CD4-positive, alpha-beta memory T cell (primary cell): ENCODE measurements at regions of chr17 and their contacts with region 1.

Region 1: DNA sequence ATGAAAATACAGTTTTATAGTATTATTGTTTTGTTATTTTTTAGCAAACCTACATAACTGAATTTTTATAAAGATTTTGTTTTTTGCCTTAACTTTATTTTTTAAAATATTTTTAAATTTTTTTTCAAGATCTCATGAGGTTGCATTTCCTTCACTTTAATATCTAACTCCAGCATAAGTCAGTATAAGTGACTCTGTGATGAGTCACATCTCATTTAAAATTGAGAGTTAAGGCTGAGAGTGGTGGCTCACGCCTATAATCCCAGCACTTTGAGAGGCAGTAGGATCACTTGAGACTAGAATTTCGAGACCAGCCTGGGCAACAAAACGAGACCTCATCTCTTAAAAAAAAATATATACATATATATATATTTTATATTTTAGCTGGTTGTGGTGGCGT is 44.0 kb downstream of the NLK start:
- DNase-seq: no peak
- H3K4me3 ChIP-seq: no peak overlapping the region
- H3K4me3 Mint-ChIP-seq: no peak overlapping the region
- H3K27ac ChIP-seq: no peak overlapping the region
- H3K27ac Mint-ChIP-seq: no peak overlapping the region
- H3K4me1 ChIP-seq: no peaks in the 10 kb centered on the region
- H3K4me1 Mint-ChIP-seq: peaks cover 10 to 55% (median 15%) of the 10 kb centered on the region in 4 donors
- H3K27me3 ChIP-seq: no peaks in the 10 kb centered on the region
- H3K27me3 Mint-ChIP-seq: no peaks in the 10 kb centered on the region

Region 2: GRCh38 chr17:28145348-28145747 is 58.8 kb after region 1 on chr17:
- CTCF ChIA-PET with region 1: no interaction called
- POLR2A ChIA-PET with region 1: no interaction called
- intact Hi-C with region 1: loop called (anchors 10 kb)
- DNase-seq: no peak
- H3K4me3 ChIP-seq: no peak overlapping the region
- H3K4me3 Mint-ChIP-seq: no peak overlapping the region
- H3K27ac ChIP-seq: no peak overlapping the region
- H3K27ac Mint-ChIP-seq: no peak overlapping the region
- H3K4me1 ChIP-seq: no peaks in the 10 kb centered on the region
- H3K4me1 Mint-ChIP-seq: no peaks in the 10 kb centered on the region
- H3K27me3 ChIP-seq: no peaks in the 10 kb centered on the region
- H3K27me3 Mint-ChIP-seq: no peaks in the 10 kb centered on the region